Activated naive CD4-positive, alpha-beta T cell treated with anti-CD3 and anti-CD28 coated beads for 36 hours (primary cell): ENCODE measurements at regions of chr18 and their contacts with region 1.

Region 1: DNA sequence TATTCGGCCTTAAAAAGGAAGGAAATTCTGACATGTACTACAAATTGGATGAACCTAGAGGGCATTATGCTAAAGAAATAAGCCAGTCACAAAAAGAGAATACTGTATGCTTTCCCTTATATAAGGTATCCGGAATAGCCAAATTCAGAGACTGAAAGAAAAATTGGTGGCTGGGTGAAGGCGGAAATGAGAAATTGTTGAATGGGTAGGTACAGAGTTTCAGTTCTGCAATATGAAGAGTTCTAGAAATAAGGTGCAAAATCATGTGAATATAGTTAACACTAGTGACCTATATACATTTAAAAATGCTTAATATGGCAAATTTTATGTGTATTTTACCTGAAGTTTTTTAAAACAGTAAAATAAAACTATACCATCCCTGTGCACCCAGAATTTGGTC is 43.1 kb downstream of the RMP24 start:
- DNase-seq: no peak
- H3K4me3 Mint-ChIP-seq: no peak overlapping the region
- H3K27ac Mint-ChIP-seq: no peak overlapping the region
- H3K4me1 Mint-ChIP-seq: peaks cover 2% of the 10 kb centered on the region
- H3K27me3 Mint-ChIP-seq: no peaks in the 10 kb centered on the region

Region 2: GRCh38 chr18:35661483-35662146 is 354.0 kb before region 1 on chr18:
- CTCF ChIA-PET with region 1: no interaction called
- intact Hi-C with region 1: no loop called
- DNase-seq: no peak
- H3K4me3 Mint-ChIP-seq: no peak overlapping the region
- H3K27ac Mint-ChIP-seq: no peak overlapping the region
- H3K4me1 Mint-ChIP-seq: no peaks in the 10 kb centered on the region
- H3K27me3 Mint-ChIP-seq: no peaks in the 10 kb centered on the region

Region 3: DNA sequence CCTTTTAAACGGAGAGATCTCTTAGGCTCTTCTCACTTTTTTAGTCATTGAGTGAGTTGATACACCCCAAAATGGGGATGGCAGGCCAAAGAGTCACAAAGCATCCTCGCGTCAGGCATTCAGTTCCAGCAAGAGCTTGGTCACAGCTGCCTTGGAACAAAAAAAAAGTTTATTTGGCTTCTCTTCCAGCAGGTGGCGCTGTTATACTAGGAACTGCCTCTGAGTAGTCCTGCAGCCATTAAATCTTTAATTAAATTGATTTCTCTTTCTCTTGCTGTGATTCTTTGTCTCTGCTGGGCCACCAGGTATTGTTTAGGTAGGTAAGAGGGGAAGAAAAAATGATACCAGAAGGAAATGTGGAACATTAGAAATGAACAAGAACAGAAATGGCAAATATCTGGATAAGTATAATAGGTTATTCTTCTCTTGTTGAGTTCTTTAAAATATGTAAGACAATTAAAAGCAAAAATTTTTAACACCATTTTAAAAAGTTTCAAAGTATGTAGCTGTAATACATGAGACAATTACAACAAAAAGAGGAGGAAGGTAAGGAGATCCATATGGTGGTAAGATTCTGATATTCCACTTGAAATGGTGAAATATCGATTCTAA is 259.0 kb before region 1 on chr18:
- CTCF ChIA-PET with region 1: interaction called, 4 read pairs
- intact Hi-C with region 1: loop called (anchors 1 kb)
- DNase-seq: peak; percentile 78
- H3K4me3 Mint-ChIP-seq: no peak overlapping the region
- H3K27ac Mint-ChIP-seq: no peak overlapping the region
- H3K4me1 Mint-ChIP-seq: no peaks in the 10 kb centered on the region
- H3K27me3 Mint-ChIP-seq: peaks cover 18% of the 10 kb centered on the region

Region 4: GRCh38 chr18:36186911-36187834 is 171.5 kb after region 1 on chr18 and contains the start of gene MOCOS:
- CTCF ChIA-PET with region 1: no interaction called
- intact Hi-C with region 1: loop called (anchors 10 kb)
- DNase-seq: peak; percentile 36
- H3K4me3 Mint-ChIP-seq: peak within 1 kb of the TSS; percentile 73
- H3K27ac Mint-ChIP-seq: no peak within 1 kb of the TSS
- H3K4me1 Mint-ChIP-seq: peaks cover 3% of the 10 kb centered on the region
- H3K27me3 Mint-ChIP-seq: peaks cover 20% of the 10 kb centered on the region
- total RNA-seq, gene MOCOS: not detected

Region 5: GRCh38 chr18:36284671-36285295 is 269.2 kb after region 1 on chr18:
- CTCF ChIA-PET with region 1: interaction called, 34 read pairs
- intact Hi-C with region 1: loop called (anchors 1 kb)
- DNase-seq: peak; percentile 55
- H3K4me3 Mint-ChIP-seq: no peak overlapping the region
- H3K27ac Mint-ChIP-seq: no peak overlapping the region
- H3K4me1 Mint-ChIP-seq: no peaks in the 10 kb centered on the region
- H3K27me3 Mint-ChIP-seq: peaks cover 14% of the 10 kb centered on the region

Region 6: DNA sequence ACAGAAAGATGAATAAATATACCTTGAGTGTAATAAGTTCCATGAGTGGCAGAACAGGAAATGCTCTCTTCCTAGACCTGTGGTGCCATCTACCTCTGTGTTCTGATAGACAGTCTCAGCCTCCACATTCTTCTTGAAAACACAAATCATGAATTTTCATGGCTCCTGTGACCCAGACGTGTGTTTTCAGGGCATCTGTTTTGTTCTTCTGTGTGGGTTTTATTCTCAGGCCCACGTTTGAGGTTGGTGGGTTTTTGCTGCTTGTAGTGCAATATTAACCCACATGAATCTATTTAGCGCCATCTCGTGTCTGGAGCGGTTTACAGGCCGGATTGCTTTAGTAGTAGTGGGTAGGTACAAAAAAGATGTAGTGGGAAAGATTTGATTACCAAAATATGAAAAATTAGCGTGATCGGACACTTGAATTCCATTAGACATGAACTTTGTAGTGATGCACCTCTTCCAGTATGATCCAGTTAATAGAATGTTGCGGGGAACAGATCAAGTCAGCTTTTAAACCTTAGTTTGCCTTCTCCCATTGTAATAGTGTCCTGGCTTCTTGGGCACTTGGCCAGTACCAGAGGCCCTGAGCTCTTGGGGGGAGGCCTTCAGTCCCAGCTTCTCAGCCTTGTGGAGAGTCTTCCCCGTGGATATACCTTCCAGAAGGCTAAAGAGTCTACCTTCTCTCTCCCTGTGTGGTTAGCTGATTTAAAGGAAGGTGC is 556.7 kb after region 1 on chr18:
- CTCF ChIA-PET with region 1: no interaction called
- intact Hi-C with region 1: loop called (anchors 1 kb)
- DNase-seq: peak; percentile 50
- H3K4me3 Mint-ChIP-seq: no peak overlapping the region
- H3K27ac Mint-ChIP-seq: no peak overlapping the region
- H3K4me1 Mint-ChIP-seq: no peaks in the 10 kb centered on the region
- H3K27me3 Mint-ChIP-seq: peaks cover 8% of the 10 kb centered on the region